ENCODE measurements at regions of chr1 and their contacts with region 1.

Region 1: DNA sequence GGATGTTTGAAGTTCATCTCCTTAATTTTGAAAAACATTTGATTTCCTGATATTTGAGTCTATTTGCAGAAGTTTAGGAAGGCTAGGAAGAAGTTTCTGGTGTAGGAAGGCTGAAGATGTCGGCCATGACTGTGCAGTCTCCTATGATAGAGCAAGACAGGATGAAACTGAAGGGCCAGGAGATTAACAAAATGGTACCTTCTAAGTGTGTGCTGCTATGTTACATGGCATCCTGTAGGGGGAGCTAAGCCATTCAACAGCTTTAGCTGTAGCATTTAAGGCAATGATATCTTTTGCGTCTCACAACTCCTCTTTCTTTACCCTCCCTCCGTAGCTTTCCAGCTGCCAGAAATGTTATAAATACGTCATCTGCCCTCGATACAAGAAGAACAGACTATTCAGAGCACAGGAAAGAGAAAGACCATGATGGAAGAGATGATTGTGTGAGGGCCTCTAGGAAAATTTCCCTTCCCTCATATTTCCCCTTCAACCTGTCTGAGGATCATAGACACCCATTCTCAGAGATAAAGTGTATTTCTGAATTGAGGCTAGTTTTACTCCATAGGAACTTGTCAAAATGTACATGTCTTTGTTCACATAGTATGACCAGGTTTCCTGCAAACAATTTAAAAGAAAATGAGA is 61.1 kb downstream of the XCL1 start:
- DNase-seq: peak in 1 of 2 experiments; percentile 19
- H3K4me3 ChIP-seq: no peak overlapping the region
- H3K4me3 Mint-ChIP-seq: no peak overlapping the region
- H3K27ac Mint-ChIP-seq: no peak overlapping the region
- H3K4me1 ChIP-seq: peaks cover 8% of the 10 kb centered on the region; the same call in 1 of the 2 replicates
- H3K4me1 Mint-ChIP-seq: peaks cover 15% of the 10 kb centered on the region
- H3K27me3 ChIP-seq: no peaks in the 10 kb centered on the region
- H3K27me3 Mint-ChIP-seq: no peaks in the 10 kb centered on the region
- CTCF ChIP-seq: peak; percentile 34 to 52

Region 2: DNA sequence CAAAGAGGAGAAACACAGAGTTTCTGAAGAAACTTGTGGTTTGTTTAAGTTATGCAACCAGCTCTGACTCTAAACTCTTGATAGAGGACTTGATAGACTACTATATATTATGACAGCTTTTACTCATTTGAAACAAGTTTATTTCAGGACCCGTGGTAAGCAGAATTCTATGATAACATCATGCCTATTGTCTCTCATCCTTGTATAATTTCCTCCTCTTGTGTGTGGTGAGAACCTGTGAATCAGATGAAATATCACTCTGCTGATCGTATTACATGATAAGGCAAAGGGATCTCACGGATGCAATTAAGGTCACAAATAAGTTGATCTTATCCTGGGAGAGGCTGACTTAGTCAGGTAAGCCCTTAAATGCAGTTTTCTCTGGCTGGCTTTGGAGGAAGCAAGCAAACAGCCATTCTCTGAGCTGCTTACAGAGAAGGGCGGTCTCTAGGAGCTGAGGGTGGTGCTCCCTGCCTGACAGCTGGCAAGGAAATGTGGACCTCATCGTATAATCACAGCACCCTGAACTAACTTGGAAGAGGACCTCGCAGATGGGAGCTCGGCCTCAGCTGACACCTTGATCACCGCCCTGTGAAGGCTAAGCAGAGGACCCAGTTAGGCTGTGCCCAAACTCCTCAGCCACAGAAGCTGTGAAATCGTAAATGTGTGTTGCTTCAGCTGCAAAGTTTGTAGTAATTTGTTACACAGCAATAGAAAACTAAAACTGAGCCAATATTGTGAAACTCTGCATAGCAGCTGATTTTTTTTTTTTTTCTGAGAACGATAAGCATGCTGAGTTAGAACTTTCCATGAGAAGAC is 242.7 kb after region 1 on chr1:
- CTCF ChIA-PET with region 1: no interaction called
- POLR2A ChIA-PET with region 1: no interaction called
- intact Hi-C with region 1: no loop called
- DNase-seq: no peak
- H3K4me3 ChIP-seq: no peak overlapping the region
- H3K4me3 Mint-ChIP-seq: no peak overlapping the region
- H3K27ac Mint-ChIP-seq: no peak overlapping the region
- H3K4me1 ChIP-seq: peaks cover 24% of the 10 kb centered on the region
- H3K4me1 Mint-ChIP-seq: peaks cover 44% of the 10 kb centered on the region
- H3K27me3 ChIP-seq: no peaks in the 10 kb centered on the region
- H3K27me3 Mint-ChIP-seq: no peaks in the 10 kb centered on the region
- CTCF ChIP-seq: no peak

Region 3: DNA sequence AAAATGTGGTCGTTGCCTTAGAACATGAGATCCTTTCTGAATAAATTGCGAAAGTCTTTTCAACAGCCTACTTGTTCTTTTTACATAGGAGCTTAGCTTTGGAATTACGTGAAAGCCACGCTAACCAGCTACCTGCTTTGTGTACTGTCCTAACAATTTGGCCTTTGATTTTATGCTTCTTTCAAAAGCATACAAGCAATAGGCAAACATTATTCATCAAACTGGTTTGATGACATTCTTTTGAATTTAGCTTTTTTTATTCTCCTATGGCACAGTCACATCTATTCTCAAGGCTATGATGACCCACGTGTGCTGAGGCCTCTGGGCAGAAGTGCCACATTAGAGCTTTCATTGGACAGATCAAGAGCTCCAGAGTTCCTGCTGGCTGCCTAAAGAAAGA is 269.6 kb after region 1 on chr1:
- CTCF ChIA-PET with region 1: no interaction called
- POLR2A ChIA-PET with region 1: no interaction called
- intact Hi-C with region 1: loop called (anchors 5 kb)
- DNase-seq: peak; percentile 52 to 67
- H3K4me3 ChIP-seq: no peak overlapping the region
- H3K4me3 Mint-ChIP-seq: no peak overlapping the region
- H3K27ac Mint-ChIP-seq: peak overlapping the region; percentile 61
- H3K4me1 ChIP-seq: peaks cover 29% of the 10 kb centered on the region
- H3K4me1 Mint-ChIP-seq: peaks cover 26% of the 10 kb centered on the region
- H3K27me3 ChIP-seq: no peaks in the 10 kb centered on the region
- H3K27me3 Mint-ChIP-seq: no peaks in the 10 kb centered on the region
- CTCF ChIP-seq: no peak